ENCODE measurements at regions of chr1 and their contacts with region 1.

Region 1: GRCh38 chr1:203673550-203674427 is 47.2 kb downstream of the ATP2B4 start:
- DNase-seq: peak; percentile 86 to 98
- H3K4me3 ChIP-seq: no peak overlapping the region
- H3K27ac ChIP-seq: peak overlapping the region; percentile 69
- H3K4me1 ChIP-seq: peaks cover 50% of the 10 kb centered on the region
- H3K27me3 ChIP-seq: no peaks in the 10 kb centered on the region
- CTCF ChIP-seq: peak; percentile 65

Region 2: DNA sequence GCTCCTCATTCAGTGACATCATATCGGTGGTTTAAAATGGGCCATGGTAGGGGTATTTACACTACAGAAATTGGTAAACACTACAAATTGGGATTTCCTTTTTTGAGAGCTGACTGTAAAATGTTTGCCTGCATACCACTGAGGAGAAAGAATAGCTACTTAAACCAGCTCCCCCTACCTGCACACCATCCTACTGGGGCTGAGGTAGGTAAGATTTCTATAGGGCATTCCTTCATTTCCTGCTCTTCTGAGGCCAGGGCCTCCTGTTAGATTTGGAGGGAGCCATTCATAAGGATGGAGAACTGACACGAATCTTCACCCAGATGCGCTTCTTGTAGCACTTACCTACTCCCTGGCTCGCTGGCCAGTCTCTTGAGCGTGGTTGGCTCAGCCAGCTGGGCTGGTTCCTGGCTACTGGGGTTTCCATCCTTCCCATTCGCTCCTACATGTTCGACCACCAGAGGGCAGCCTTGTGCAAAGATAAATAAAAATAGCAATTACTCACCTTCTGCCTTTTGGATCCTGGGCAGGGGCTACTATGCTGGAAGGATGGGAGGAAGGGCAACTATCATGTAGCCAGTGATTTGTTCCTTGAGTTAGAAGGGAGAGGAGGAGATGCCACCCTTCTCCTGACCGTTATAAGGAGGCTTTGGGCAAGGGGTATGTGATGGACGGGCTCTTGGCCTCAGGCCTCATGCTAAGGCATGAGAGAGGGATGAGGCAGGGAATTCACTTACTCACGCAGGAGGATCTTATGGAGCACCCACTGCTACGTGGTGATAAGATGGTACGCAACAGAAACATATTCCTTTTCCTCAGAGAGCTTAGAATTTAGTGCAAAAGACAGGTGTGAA is 169.2 kb before region 1 on chr1:
- CTCF ChIA-PET with region 1: interaction called, 4 read pairs
- POLR2A ChIA-PET with region 1: no interaction called
- intact Hi-C with region 1: loop called (anchors 1 kb)
- DNase-seq: peak; percentile 65 to 78
- H3K4me3 ChIP-seq: no peak overlapping the region
- H3K27ac ChIP-seq: no peak overlapping the region
- H3K4me1 ChIP-seq: peaks cover 15% of the 10 kb centered on the region
- H3K27me3 ChIP-seq: no peaks in the 10 kb centered on the region
- CTCF ChIP-seq: peak; percentile 95

Region 3: DNA sequence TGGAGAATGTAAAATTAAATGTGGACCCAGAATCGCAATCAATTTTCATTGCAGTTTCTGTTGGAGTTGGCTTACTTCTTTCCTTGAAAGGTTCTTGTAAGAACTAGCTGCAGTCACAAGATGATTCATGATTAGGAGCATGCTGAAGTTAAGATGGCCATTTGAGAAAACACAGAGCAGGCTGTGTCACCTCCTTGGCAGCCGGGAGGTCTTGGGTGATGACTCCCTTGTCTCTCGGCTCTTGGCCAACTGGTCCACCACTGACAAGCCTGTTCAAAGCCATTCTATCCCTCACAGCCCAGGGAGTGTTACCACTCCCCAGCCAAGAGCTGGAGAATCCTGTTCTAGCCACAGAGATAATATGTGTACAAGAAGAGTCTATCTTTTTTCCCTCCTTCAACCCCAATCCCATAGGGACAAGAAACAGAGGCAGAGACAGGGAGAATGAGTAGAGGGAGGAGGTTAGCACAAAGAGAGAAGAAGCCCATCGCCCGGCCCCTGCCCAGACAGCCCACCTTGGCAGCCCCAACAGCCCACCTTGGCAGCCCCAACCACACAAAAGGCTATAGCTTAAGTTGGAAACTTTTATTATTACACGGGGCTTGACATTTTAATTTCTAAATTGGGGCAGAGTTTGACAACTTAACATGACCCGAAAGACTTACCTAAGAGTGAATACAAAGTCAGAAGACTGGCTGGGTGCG is 139.1 kb before region 1 on chr1:
- CTCF ChIA-PET with region 1: no interaction called
- POLR2A ChIA-PET with region 1: interaction called, 28 read pairs
- intact Hi-C with region 1: no loop called
- DNase-seq: peak; percentile 81 to 95
- H3K4me3 ChIP-seq: no peak overlapping the region
- H3K27ac ChIP-seq: peak overlapping the region; percentile 93
- H3K4me1 ChIP-seq: peaks cover 74% of the 10 kb centered on the region
- H3K27me3 ChIP-seq: no peaks in the 10 kb centered on the region
- CTCF ChIP-seq: no peak

Region 4: DNA sequence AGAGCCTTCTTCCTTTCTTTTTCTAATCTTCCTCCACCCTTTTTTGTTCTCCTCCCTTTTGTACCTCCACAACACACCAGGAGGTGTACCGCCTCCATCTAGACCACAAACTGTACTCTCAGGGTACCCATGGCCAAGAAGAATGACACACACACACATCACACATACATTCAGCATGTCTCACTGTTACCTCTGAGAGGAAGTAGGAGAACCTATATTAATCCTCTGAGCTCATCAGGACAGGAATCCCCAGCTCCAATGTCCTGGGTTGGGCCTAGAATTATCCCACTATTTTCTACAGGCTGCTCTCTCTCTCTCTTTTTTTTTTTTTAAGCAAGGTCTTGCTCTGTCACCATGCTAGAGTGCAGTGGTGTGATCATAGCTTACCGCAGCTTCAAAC is 10.5 kb before region 1 on chr1:
- CTCF ChIA-PET with region 1: interaction called, 10 read pairs
- POLR2A ChIA-PET with region 1: interaction called, 23 read pairs
- intact Hi-C with region 1: no loop called
- DNase-seq: peak; percentile 40 to 88
- H3K4me3 ChIP-seq: no peak overlapping the region
- H3K27ac ChIP-seq: peak overlapping the region; percentile 77
- H3K4me1 ChIP-seq: peaks cover 44% of the 10 kb centered on the region
- H3K27me3 ChIP-seq: no peaks in the 10 kb centered on the region
- CTCF ChIP-seq: no peak

Region 5: GRCh38 chr1:203702130-203702577 is 28.4 kb after region 1 on chr1:
- CTCF ChIA-PET with region 1: interaction called, 5 read pairs
- POLR2A ChIA-PET with region 1: no interaction called
- intact Hi-C with region 1: loop called (anchors 1 kb)
- DNase-seq: peak; percentile 39 to 49
- H3K4me3 ChIP-seq: no peak overlapping the region
- H3K27ac ChIP-seq: no peak overlapping the region
- H3K4me1 ChIP-seq: no peaks in the 10 kb centered on the region
- H3K27me3 ChIP-seq: no peaks in the 10 kb centered on the region
- CTCF ChIP-seq: peak; percentile 99

Measured in PC-9 (cell line).